ENCODE measurements at regions of chr13 and their contacts with region 1.

Region 1: GRCh38 chr13:50081679-50082425 is 66.6 kb downstream of the KCNRG start:
- DNase-seq: peak; percentile 93
- CTCF ChIP-seq: no peak

Region 2: GRCh38 chr13:50801087-50801931 is 719.5 kb after region 1 on chr13:
- in situ Hi-C with region 1: loop called (anchors 10 kb)
- DNase-seq: peak; percentile 38
- CTCF ChIP-seq: peak; percentile 83